H1 (cell line): ENCODE measurements at regions of chr10 and their contacts with region 1.

Region 1: GRCh38 chr10:77837240-77837924 is 89.2 kb downstream of the DLG5 start:
- DNase-seq: peak in 1 of 2 experiments; percentile 83
- H3K4me3 ChIP-seq: no peak overlapping the region
- H3K27ac ChIP-seq: peak overlapping the region; percentile 52; the same call in 1 of the 2 replicates
- H3K4me1 ChIP-seq: peaks cover 3 to 7% (median 4%) of the 10 kb centered on the region in 4 experiments
- H3K27me3 ChIP-seq: no peaks in the 10 kb centered on the region
- CTCF ChIP-seq: peak; percentile 47 to 69 (median 64)
- EP300 ChIP-seq: no peak
- POLR2A ChIP-seq: no peak
- RAD21 ChIP-seq: peak; percentile 35 to 59; a peak in 3 of 4 replicates

Region 2: DNA sequence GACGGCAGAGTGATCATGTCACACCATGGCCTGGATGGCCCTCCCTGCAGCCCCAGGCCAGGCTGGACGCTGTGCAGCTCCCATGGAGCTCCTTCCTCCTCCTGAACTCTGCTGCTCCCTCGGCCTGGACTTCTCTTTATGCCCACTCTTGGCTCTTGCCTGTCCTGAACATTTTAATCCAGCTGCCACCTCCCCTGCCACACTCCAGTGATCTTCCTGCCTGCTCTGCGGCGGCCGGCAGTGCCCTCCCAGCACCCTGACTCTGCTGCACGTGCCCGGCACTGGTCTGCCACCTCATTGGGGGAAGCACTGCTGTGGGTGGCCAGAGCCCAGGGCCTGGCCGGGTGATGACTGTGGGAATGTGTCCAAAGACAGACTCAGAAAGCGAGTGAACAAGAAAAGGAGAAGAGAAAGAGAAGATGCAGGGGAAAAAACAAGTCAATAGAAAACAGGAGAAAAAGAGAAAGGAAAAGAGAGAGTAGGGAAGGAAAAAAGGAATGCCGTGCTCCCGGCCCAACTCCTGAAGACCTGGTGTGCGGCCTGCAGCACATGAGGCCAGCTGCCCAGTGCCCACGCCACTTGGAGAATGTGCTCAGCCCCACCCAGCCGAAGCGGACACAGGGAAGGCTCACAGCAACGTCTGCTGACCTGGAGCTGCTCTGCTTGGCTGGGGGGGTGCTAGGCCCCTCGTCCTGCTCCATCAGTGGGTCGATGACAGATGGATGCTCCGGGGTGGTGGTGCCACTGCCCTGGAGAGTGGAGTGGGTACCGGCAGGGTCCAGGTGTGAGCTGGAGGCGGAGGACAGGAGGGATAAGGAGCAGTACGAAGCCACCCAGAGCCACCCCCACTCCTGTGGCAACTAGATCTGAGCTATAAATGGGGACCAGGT is 26.7 kb before region 1 on chr10:
- CTCF ChIA-PET with region 1: interaction called, 10 read pairs
- POLR2A ChIA-PET with region 1: interaction called, 5 read pairs
- DNase-seq: no peak
- H3K4me3 ChIP-seq: no peak overlapping the region
- H3K27ac ChIP-seq: no peak overlapping the region
- H3K4me1 ChIP-seq: no peaks in the 10 kb centered on the region
- H3K27me3 ChIP-seq: no peaks in the 10 kb centered on the region
- CTCF ChIP-seq: no peak
- EP300 ChIP-seq: no peak
- POLR2A ChIP-seq: no peak
- RAD21 ChIP-seq: no peak

Region 3: GRCh38 chr10:77820349-77820748 is 17.0 kb before region 1 on chr10:
- CTCF ChIA-PET with region 1: interaction called, 19 read pairs
- POLR2A ChIA-PET with region 1: no interaction called
- DNase-seq: no peak
- H3K4me3 ChIP-seq: no peak overlapping the region
- H3K27ac ChIP-seq: no peak overlapping the region
- H3K4me1 ChIP-seq: no peaks in the 10 kb centered on the region
- H3K27me3 ChIP-seq: no peaks in the 10 kb centered on the region
- CTCF ChIP-seq: no peak
- EP300 ChIP-seq: no peak
- POLR2A ChIP-seq: no peak
- RAD21 ChIP-seq: no peak

Region 4: DNA sequence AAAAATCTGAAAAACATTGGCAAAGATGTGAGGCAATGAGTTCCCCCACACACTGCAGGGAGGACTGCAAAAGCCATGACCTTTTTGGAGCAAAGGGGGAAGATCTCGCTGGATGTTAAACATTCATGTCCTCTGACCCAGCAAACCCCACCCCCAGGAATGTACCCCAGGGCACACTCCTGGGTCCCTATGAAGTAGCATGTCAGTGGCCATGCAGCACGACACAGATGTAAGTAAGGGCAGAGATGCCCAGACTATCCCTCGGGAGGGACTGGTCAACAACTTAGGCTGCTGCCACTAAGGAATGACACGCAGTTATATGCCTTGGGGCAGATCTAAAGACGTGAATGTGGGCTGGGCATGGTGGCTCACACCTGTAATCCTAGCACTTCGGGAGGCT is 11.4 kb before region 1 on chr10:
- CTCF ChIA-PET with region 1: interaction called, 19 read pairs
- POLR2A ChIA-PET with region 1: no interaction called
- DNase-seq: no peak
- H3K4me3 ChIP-seq: no peak overlapping the region
- H3K27ac ChIP-seq: no peak overlapping the region
- H3K4me1 ChIP-seq: no peaks in the 10 kb centered on the region
- H3K27me3 ChIP-seq: no peaks in the 10 kb centered on the region
- CTCF ChIP-seq: no peak
- EP300 ChIP-seq: no peak
- POLR2A ChIP-seq: no peak
- RAD21 ChIP-seq: no peak

Region 5: GRCh38 chr10:78004215-78005026 is 167.0 kb after region 1 on chr10:
- CTCF ChIA-PET with region 1: no interaction called
- POLR2A ChIA-PET with region 1: no interaction called
- DNase-seq: no peak
- H3K4me3 ChIP-seq: no peak overlapping the region
- H3K27ac ChIP-seq: no peak overlapping the region
- H3K4me1 ChIP-seq: no peaks in the 10 kb centered on the region
- H3K27me3 ChIP-seq: no peaks in the 10 kb centered on the region
- CTCF ChIP-seq: no peak
- EP300 ChIP-seq: no peak
- POLR2A ChIP-seq: no peak
- RAD21 ChIP-seq: 0 out of 4 replicates have a peak, but pooled peaks of 1 of the 2 experiments have one; percentile 8